Colonic mucosa (tissue), 4 donors: ENCODE measurements at regions of chr12 and their contacts with region 1.

Region 1: GRCh38 chr12:50066433-50066832 is 9.0 kb downstream of the ASIC1 start:
- DNase-seq: no peak
- H3K4me3 ChIP-seq: no peak overlapping the region
- H3K27ac ChIP-seq: peak overlapping the region; percentile 3
- H3K4me1 ChIP-seq: no peaks in the 10 kb centered on the region
- H3K27me3 ChIP-seq: no peaks in the 10 kb centered on the region
- CTCF ChIP-seq: no peak

Region 2: DNA sequence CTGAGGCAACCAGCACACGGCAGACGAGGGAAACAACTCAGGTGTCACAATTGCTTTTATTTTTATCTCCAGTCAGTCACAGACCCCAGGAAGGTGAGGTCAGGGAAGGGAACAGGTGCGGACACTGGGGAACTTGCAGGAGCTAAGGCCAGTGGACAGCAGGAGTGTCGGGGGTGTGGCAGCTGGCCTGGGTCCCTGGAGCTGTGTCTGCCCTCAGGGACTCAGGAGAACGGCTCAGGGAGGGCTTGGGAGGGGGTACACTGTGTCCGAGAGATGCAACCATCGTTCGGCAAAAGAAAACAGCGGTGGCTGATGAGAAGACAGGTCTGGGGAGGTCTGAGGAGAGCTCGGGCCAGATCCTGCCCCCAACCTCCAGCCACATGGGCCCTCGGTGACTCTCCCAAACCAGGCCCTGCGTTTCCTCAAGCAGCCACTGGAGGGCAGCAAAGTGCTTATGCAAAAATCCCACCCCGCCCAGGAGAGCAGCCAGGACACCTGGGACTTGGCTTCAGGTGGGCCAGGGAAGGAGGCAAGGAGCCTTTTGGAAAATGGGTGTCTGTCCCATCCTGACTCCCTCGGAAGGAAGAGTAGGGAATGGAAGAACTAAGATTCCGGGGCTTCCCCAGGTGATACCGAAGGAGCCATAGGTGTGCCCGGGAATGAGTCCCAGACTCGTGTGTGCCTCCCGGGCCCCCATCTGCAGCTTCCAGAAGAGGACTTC is 199.4 kb before region 1 on chr12:
- intact Hi-C with region 1: loop called (anchors 10 kb)
- DNase-seq: peak; percentile 81
- H3K4me3 ChIP-seq: no peak overlapping the region
- H3K27ac ChIP-seq: no peak overlapping the region
- H3K4me1 ChIP-seq: peaks cover 7% of the 10 kb centered on the region
- H3K27me3 ChIP-seq: no peaks in the 10 kb centered on the region
- CTCF ChIP-seq: peak; percentile 97

Region 3: DNA sequence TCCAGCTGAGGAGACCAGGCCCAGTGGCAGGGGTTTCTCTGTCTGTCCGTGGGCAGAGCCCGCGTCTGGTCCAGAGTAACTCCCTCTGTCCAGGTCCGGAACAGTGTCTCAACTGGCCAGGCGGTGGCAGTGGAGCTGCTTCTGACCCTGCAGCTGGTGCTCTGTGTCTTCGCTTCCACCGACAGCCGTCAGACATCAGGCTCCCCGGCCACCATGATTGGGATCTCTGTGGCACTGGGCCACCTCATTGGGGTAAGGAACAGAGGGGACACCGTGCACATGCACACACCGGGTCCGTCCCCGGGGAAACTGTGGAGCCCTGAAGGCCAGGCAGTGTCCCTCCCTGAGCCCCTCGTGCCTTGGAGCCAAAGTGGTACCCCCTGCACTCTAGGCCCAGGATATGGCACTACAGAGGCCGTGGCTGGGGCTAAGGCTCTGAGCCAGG is 92.2 kb before region 1 on chr12:
- intact Hi-C with region 1: loop called (anchors 5 kb)
- DNase-seq: peak; percentile 43
- H3K4me3 ChIP-seq: no peak overlapping the region
- H3K27ac ChIP-seq: no peak overlapping the region
- H3K4me1 ChIP-seq: no peaks in the 10 kb centered on the region
- H3K27me3 ChIP-seq: no peaks in the 10 kb centered on the region
- CTCF ChIP-seq: peak; percentile 30